OCI-LY7 (cell line): ENCODE measurements at regions of chr1 and their contacts with region 1.

Region 1: DNA sequence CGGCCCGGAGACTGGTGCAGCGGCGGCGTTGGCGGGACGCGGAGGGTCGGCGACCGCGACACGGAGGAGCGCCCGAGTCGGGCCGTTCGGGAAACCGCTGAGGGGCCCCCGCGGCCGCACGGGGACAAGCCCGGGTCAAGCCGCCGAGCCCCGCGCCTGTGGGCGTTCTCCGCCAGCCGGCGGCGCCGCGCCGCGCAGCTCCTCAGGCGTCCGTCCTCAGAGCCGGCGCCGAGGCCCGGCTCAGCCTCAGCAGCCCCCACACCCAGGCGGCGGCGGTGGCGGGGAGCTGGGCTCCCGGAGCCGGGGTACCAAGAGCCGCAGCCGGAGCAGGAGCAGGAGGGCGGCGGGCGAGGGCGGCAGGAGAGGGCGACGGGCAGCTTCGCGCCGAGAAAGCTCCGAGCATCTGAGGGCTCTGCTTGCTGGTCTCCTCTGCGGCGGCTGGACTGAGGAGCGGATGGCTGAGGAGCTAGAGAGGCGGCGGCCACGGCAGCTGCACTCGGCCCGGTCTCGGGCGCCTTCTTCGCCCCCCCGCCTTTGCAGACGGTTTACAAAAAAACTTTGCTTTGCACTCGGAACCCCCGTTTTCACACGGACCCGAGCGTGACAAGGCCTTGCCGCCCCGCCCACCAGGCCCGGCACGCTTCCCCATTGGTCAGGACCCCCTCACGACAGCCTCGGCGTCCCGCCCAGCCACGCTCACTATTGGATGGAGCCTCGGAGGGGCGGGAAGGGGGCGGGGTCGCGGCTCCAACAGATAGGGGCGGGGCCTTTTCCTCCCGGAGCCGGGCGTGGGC is at the start of gene SLC30A1:
- DNase-seq: peak; percentile 99
- H3K4me3 ChIP-seq: peak within 1 kb of the TSS; percentile 83
- H3K27ac ChIP-seq: peak within 1 kb of the TSS; percentile 81
- H3K4me1 ChIP-seq: peaks cover 40% of the 10 kb centered on the region
- CTCF ChIP-seq: no peak
- total RNA-seq, gene SLC30A1: 6.1 and 6.5 TPM in 2 replicates

Region 2: GRCh38 chr1:209827384-209828262 is 1751.2 kb before region 1 on chr1 and contains the start of gene UTP25:
- CTCF ChIA-PET with region 1: no interaction called
- POLR2A ChIA-PET with region 1: no interaction called
- intact Hi-C with region 1: loop called (anchors 5 kb)
- DNase-seq: peak; percentile 98
- H3K4me3 ChIP-seq: peak within 1 kb of the TSS; percentile 98
- H3K27ac ChIP-seq: peak within 1 kb of the TSS; percentile 56
- H3K4me1 ChIP-seq: peaks cover 19% of the 10 kb centered on the region
- CTCF ChIP-seq: peak; percentile 78
- total RNA-seq, gene UTP25: 10.4 and 12.8 TPM in 2 replicates

Region 3: DNA sequence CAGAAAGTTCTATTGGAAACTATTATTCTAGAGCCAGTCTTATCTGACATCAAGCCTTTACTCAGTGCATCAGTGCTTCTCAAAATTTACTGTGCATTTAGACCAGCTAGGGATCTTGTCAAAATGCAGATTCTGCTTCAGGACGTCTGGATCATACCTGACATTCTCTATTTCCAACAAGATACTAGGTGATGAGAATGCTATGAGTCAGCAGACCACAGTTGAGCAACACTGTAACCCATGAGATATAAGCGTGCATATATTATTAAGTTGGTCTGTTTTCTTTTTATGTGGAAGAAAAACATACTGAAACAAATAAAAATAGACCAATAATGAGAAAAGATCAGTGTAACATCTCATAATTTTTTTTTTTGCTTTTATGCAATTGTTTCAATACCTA is 404.5 kb before region 1 on chr1:
- CTCF ChIA-PET with region 1: no interaction called
- POLR2A ChIA-PET with region 1: no interaction called
- intact Hi-C with region 1: no loop called
- DNase-seq: no peak
- H3K4me3 ChIP-seq: no peak overlapping the region
- H3K27ac ChIP-seq: no peak overlapping the region
- H3K4me1 ChIP-seq: no peaks in the 10 kb centered on the region
- CTCF ChIP-seq: no peak

Region 4: GRCh38 chr1:211514030-211514754 is 64.6 kb before region 1 on chr1:
- CTCF ChIA-PET with region 1: interaction called, 3 read pairs
- POLR2A ChIA-PET with region 1: no interaction called
- intact Hi-C with region 1: loop called (anchors 2 kb)
- DNase-seq: peak; percentile 84
- H3K4me3 ChIP-seq: peak overlapping the region; percentile 7
- H3K27ac ChIP-seq: no peak overlapping the region
- H3K4me1 ChIP-seq: peaks cover 45% of the 10 kb centered on the region
- CTCF ChIP-seq: peak; percentile 86

Region 5: GRCh38 chr1:211654838-211655787 is 76.3 kb after region 1 on chr1:
- CTCF ChIA-PET with region 1: no interaction called
- POLR2A ChIA-PET with region 1: interaction called, 4 read pairs
- intact Hi-C with region 1: loop called (anchors 1 kb)
- DNase-seq: peak; percentile 80
- H3K4me3 ChIP-seq: no peak overlapping the region
- H3K27ac ChIP-seq: no peak overlapping the region
- H3K4me1 ChIP-seq: no peaks in the 10 kb centered on the region
- CTCF ChIP-seq: peak; percentile 97

Region 6: DNA sequence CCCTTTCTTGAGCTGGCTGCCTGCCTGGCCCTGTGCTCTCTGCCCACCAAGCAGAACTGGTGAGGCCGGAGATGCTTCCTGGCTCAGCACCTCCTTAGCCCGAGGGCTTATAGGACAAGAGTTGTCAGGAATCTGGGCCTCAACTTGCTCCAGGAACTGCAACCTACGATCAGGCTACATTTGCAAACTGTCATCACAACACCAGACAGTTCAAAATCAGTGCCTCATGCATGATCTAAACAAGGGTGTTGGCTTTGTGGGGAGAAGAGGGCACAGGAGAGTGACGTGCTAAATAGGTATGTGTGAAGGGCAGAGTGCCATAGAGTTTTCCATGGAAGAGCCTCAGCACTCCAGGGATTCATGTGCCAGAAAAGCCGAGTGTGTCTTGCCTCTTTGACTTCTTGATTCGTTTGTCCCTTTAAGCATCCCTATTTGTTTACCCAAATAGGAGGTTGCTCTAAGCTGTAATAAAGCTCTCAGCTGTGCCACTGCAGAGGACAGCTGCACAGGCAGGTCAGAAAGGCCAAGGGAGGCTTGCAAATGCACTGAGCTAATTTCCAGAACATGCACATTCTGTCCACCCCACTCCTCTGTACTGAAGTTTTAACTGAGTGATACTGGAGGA is 126.7 kb after region 1 on chr1:
- CTCF ChIA-PET with region 1: no interaction called
- POLR2A ChIA-PET with region 1: no interaction called
- intact Hi-C with region 1: no loop called
- DNase-seq: no peak
- H3K4me3 ChIP-seq: no peak overlapping the region
- H3K27ac ChIP-seq: no peak overlapping the region
- H3K4me1 ChIP-seq: peaks cover 9% of the 10 kb centered on the region
- CTCF ChIP-seq: no peak

Region 7: GRCh38 chr1:211830330-211831142 is 251.7 kb after region 1 on chr1 and contains the start of gene LPGAT1:
- CTCF ChIA-PET with region 1: no interaction called
- POLR2A ChIA-PET with region 1: no interaction called
- intact Hi-C with region 1: loop called (anchors 10 kb)
- DNase-seq: peak; percentile 81
- H3K4me3 ChIP-seq: peak within 1 kb of the TSS; percentile 77
- H3K27ac ChIP-seq: peak within 1 kb of the TSS; percentile 48
- H3K4me1 ChIP-seq: peaks cover 32% of the 10 kb centered on the region
- CTCF ChIP-seq: peak; percentile 75
- total RNA-seq, gene LPGAT1: 14.1 and 18.7 TPM in 2 replicates